Heart left ventricle (tissue), 16 donors: ENCODE measurements at regions of chr13 and their contacts with region 1.

Region 1: DNA sequence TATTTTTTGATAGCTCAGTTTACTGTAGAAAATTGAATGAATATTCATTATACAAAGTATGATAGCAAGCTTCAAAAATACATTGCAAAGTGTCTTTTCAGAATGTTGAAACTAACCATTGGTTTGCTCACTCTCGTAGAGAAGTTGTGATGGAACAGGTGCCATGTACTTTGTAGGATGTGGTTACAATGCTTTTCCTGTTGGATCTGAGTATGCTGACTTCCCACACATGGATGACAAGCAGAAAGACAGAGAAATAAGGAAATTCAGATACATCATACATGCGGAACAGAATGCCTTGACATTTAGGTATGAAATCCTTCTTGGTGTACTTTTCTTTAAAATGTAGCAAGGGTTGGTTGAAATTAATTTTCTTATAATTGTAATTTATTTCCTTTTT is 30.5 kb downstream of the CDADC1 start:
- DNase-seq: no peak
- ATAC-seq: no peak
- H3K4me3 ChIP-seq: no peak overlapping the region
- H3K27ac ChIP-seq: no peak overlapping the region
- H3K4me1 ChIP-seq: no peaks in the 10 kb centered on the region
- H3K27me3 ChIP-seq: no peaks in the 10 kb centered on the region
- CTCF ChIP-seq: no peak
- POLR2A ChIP-seq: no peak

Region 2: DNA sequence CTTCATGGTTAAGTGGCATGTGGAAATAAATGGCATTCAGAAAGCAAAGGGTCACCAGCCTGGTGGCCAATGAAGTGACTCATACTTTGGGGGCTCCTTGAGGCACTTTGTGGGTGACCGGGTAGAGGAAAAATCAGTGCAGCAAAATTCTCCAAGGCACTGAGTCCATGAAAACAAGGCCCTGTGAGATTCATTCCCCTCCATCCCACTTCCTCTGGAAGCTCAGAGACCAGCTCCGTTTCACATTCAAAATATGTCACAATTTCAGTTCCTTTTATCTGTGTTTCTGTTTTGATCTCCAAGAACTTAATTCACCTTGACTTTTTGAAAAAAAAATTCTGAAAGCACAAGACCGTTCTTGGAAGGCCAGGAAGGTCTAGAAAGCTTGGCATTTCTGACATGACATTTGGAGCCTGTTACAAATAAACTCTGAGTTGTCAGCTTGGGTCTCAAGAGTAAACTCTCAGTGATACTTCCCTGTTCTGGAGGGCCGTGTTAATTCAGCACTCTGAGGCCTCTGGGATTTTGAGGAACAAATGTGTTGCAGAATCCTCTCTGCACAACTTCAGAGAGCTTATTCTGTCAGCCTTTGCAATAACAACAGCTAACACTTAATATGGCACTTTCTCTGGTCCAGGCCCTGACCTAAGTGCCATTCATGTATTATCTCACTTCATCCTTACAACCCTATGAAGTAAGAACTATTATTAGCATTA is 617.7 kb before region 1 on chr13:
- intact Hi-C with region 1: no loop called
- DNase-seq: peak in 2 of 5 donors; percentile 34 to 39
- ATAC-seq: peak; percentile 81 to 95 (median 82)
- H3K4me3 ChIP-seq: no peak overlapping the region
- H3K27ac ChIP-seq: peak overlapping the region; percentile 34 to 80 (median 65)
- H3K4me1 ChIP-seq: peaks cover 0 to 60% (median 18%) of the 10 kb centered on the region in 12 donors
- H3K27me3 ChIP-seq: no peaks in the 10 kb centered on the region
- CTCF ChIP-seq: no peak
- POLR2A ChIP-seq: no peak

Region 3: GRCh38 chr13:49052776-49053175 is 225.4 kb before region 1 on chr13:
- intact Hi-C with region 1: no loop called
- DNase-seq: no peak
- ATAC-seq: no peak
- H3K4me3 ChIP-seq: no peak overlapping the region
- H3K27ac ChIP-seq: no peak overlapping the region
- H3K4me1 ChIP-seq: peaks cover 0 to 9% (median 3%) of the 10 kb centered on the region in 12 donors
- H3K27me3 ChIP-seq: no peaks in the 10 kb centered on the region
- CTCF ChIP-seq: no peak
- POLR2A ChIP-seq: no peak

Region 4: GRCh38 chr13:49098771-49099512 is 179.3 kb before region 1 on chr13:
- intact Hi-C with region 1: loop called in 3 of 10 experiments (anchors 2 to 5 kb)
- DNase-seq: no peak
- ATAC-seq: peak in 3 of 4 donors; percentile 49 to 50 (median 50)
- H3K4me3 ChIP-seq: no peak overlapping the region
- H3K27ac ChIP-seq: peak overlapping the region; percentile 11 to 87 (median 75)
- H3K4me1 ChIP-seq: peaks cover 8 to 44% (median 28%) of the 10 kb centered on the region in 12 donors
- H3K27me3 ChIP-seq: no peaks in the 10 kb centered on the region
- CTCF ChIP-seq: peak; percentile 35 to 64 (median 48)
- POLR2A ChIP-seq: no peak

Region 5: GRCh38 chr13:49185264-49185663 is 92.9 kb before region 1 on chr13:
- intact Hi-C with region 1: no loop called
- DNase-seq: no peak
- ATAC-seq: no peak
- H3K4me3 ChIP-seq: no peak overlapping the region
- H3K27ac ChIP-seq: no peak overlapping the region
- H3K4me1 ChIP-seq: peaks cover 0 to 16% (median 0%) of the 10 kb centered on the region in 12 donors
- H3K27me3 ChIP-seq: no peaks in the 10 kb centered on the region
- CTCF ChIP-seq: no peak
- POLR2A ChIP-seq: no peak